ENCODE measurements at regions of chr15 and their contacts with region 1.

Region 1: DNA sequence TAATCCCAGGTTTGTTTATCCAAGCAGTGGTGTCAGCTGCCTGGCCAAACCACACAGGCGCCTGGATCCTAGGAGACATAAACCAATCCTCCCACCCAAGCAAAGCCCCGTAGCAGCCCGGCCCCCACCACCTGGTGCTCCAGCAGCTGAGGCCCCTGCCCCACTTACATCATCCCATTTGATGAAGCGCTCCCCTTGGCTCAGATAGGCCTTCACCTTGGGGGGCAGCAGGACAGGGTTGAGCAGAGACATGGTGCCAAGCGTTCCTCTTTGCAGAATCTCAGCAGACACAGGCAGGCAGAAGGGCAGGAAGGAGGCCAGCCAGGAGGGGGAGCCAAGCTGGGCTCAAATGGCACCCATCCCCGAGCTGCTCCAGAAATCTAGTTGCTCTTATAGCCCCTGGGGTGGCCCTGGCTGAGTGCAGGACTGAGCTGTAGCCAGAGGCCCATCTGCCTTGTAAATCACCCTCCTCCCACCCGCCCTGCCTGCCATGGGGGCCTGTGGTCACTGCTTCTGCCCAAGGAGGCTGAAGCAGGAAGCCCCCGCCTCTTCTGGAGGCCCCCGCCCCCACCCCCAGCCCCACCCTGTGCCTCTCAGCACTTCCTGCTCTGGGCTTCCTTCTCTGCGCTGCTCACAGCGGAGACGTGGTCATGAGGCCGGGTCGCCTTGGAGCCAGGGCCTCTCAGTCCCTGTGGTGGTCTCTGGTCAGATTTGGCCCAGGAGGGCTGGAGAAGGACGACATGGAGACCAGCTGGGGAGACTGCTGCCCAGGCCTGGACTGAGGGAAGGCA is at the start of gene PLCB2:
- DNase-seq: peak; percentile 83
- H3K4me3 Mint-ChIP-seq: peak within 1 kb of the TSS; percentile 94
- H3K27ac Mint-ChIP-seq: peak within 1 kb of the TSS; percentile 98
- H3K4me1 Mint-ChIP-seq: peaks cover 40% of the 10 kb centered on the region
- H3K27me3 Mint-ChIP-seq: peaks cover 23% of the 10 kb centered on the region

Region 2: DNA sequence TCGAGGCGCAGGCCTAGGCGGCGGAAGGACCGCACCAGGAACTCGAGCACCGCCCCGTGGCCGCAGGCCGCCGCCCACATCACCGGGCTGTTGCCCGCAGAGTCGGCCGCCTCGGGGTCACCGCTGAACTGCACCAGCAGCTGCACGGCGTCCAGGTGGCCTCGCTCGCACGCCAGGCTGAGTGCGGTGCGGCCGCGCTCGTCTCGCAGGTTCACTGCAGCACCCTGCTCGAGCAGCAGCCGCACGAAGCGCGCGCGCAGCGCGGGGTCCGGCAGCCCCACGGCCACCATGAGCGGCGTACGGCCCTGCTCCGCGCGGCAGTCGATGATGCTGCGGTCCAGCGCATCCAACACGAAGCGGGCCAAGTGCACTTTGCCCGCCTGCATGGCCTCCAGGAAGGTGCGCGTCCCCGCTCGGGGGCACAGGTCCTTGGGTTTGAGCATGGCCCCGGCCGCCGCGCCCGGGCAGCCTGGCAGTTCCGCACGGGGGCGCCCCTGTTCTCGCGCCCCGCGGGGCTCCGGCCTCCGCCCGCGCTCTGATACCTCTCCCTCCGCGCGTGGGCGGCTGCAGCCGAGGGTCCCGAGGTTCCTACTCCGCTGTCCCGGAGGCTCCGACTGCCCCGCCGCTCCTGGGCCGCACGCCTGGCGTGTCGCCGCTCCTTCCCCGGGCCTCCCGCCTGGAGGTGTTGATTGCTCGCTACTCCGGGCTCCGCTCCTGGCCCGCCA is 25.3 kb before region 1 on chr15:
- CTCF ChIA-PET with region 1: interaction called, 401 read pairs
- DNase-seq: peak; percentile 70
- H3K4me3 Mint-ChIP-seq: peak overlapping the region; percentile 66
- H3K27ac Mint-ChIP-seq: no peak overlapping the region
- H3K4me1 Mint-ChIP-seq: peaks cover 9% of the 10 kb centered on the region
- H3K27me3 Mint-ChIP-seq: peaks cover 75% of the 10 kb centered on the region

Region 3: DNA sequence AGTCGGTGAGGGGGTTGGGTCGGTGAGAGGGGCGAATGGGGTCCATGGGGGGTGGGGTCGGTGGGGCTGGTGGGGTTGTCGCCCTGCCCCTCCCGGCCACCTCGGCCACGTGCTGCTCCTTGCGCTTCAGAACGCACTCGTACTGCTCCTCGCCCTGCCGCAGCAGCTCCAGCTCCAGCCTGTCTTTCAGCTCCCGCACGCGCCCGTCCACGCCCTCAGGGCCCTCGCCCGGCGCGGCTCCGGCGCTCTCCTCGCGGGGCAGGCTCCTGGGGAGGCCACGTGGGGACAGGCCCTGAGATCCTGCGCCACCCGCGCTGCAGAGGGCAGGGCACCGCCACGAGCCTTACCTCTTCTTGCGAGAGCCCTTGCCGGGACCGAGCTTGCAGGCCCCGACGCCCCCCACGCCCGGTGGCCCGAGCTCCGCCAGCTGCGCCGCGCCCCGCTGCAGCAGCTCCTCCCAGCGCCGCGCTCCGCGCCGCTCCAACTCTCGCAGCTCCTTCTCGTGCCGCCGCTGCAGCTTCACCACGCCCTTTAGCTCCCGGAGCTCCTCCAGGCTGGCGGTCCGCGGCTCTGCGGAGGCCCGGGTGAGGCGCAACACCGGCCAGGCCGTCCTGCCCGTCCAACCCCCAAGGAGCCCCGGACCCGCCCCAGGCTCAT is 16.6 kb before region 1 on chr15:
- CTCF ChIA-PET with region 1: interaction called, 81 read pairs
- DNase-seq: no peak
- H3K4me3 Mint-ChIP-seq: no peak overlapping the region
- H3K27ac Mint-ChIP-seq: no peak overlapping the region
- H3K4me1 Mint-ChIP-seq: no peaks in the 10 kb centered on the region
- H3K27me3 Mint-ChIP-seq: no peaks in the 10 kb centered on the region

Region 4: GRCh38 chr15:40323239-40323952 is 15.8 kb after region 1 on chr15 and contains the start of gene INAFM2:
- CTCF ChIA-PET with region 1: interaction called, 69 read pairs
- DNase-seq: peak; percentile 94
- H3K4me3 Mint-ChIP-seq: peak within 1 kb of the TSS; percentile 71
- H3K27ac Mint-ChIP-seq: no peak within 1 kb of the TSS
- H3K4me1 Mint-ChIP-seq: peaks cover 29% of the 10 kb centered on the region
- H3K27me3 Mint-ChIP-seq: peaks cover 32% of the 10 kb centered on the region